ENCODE measurements at regions of chr17 and their contacts with region 1.

Region 1: GRCh38 chr17:56373981-56374833 is 219.3 kb upstream of the NOG start:
- DNase-seq: peak in 1 of 2 experiments; percentile 38
- H3K4me3 ChIP-seq: no peak overlapping the region
- H3K4me3 Mint-ChIP-seq: no peak overlapping the region
- H3K27ac Mint-ChIP-seq: peak overlapping the region; percentile 73
- H3K4me1 ChIP-seq: peaks cover 29% of the 10 kb centered on the region
- H3K4me1 Mint-ChIP-seq: peaks cover 22% of the 10 kb centered on the region
- H3K27me3 ChIP-seq: no peaks in the 10 kb centered on the region
- H3K27me3 Mint-ChIP-seq: no peaks in the 10 kb centered on the region
- CTCF ChIP-seq: no peak

Region 2: DNA sequence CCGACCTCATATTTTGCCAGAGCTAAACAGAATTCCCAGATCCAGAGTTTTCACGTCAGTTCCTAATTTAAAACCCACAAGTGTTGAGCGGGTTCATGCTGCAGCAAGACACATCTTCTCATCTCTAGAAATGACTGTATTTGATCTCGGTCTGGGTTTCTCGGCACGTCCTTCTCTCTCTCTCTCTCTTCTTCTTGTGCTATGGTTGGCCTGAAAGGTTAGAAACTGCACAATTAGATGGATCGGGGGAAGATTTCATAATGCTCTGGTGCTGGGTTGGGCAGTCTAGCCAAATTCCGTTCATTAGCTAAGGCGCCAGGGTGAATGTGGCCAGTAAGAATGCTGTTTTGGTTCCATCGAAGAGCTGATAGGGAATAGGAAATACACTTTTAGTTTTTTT is 60.4 kb after region 1 on chr17:
- CTCF ChIA-PET with region 1: no interaction called
- POLR2A ChIA-PET with region 1: no interaction called
- intact Hi-C with region 1: loop called (anchors 2 kb)
- DNase-seq: no peak
- H3K4me3 ChIP-seq: no peak overlapping the region
- H3K4me3 Mint-ChIP-seq: no peak overlapping the region
- H3K27ac Mint-ChIP-seq: no peak overlapping the region
- H3K4me1 ChIP-seq: peaks cover 20% of the 10 kb centered on the region
- H3K4me1 Mint-ChIP-seq: peaks cover 35% of the 10 kb centered on the region
- H3K27me3 ChIP-seq: no peaks in the 10 kb centered on the region; the same call in 1 of the 2 replicates
- H3K27me3 Mint-ChIP-seq: no peaks in the 10 kb centered on the region
- CTCF ChIP-seq: no peak